B cell (primary cell): ENCODE measurements at regions of chr15 and their contacts with region 1.

Region 1: GRCh38 chr15:34209421-34210282 is at the start of gene KATNBL1:
- DNase-seq: peak; percentile 97
- ATAC-seq: peak; percentile 92
- H3K4me3 ChIP-seq: peak within 1 kb of the TSS; percentile 53 to 74 (median 65)
- H3K4me3 Mint-ChIP-seq: peak within 1 kb of the TSS; percentile 93
- H3K27ac ChIP-seq: peak within 1 kb of the TSS; percentile 51 to 80
- H3K27ac Mint-ChIP-seq: peak within 1 kb of the TSS; percentile 89
- H3K4me1 ChIP-seq: peaks cover 9 to 10% of the 10 kb centered on the region in 2 donors
- H3K4me1 Mint-ChIP-seq: peaks cover 15% of the 10 kb centered on the region
- H3K27me3 ChIP-seq: no peaks in the 10 kb centered on the region
- H3K27me3 Mint-ChIP-seq: no peaks in the 10 kb centered on the region
- CTCF ChIP-seq: peak; percentile 85
- total RNA-seq, gene KATNBL1: 54.8 and 57.8 TPM in 2 replicates

Region 2: GRCh38 chr15:33547876-33548275 is 661.8 kb before region 1 on chr15:
- CTCF ChIA-PET with region 1: no interaction called
- POLR2A ChIA-PET with region 1: no interaction called
- intact Hi-C with region 1: no loop called
- DNase-seq: no peak
- ATAC-seq: no peak
- H3K4me3 ChIP-seq: no peak overlapping the region
- H3K4me3 Mint-ChIP-seq: no peak overlapping the region
- H3K27ac ChIP-seq: no peak overlapping the region
- H3K27ac Mint-ChIP-seq: no peak overlapping the region
- H3K4me1 ChIP-seq: no peaks in the 10 kb centered on the region
- H3K4me1 Mint-ChIP-seq: no peaks in the 10 kb centered on the region
- H3K27me3 ChIP-seq: no peaks in the 10 kb centered on the region
- H3K27me3 Mint-ChIP-seq: peaks cover 6% of the 10 kb centered on the region
- CTCF ChIP-seq: no peak

Region 3: GRCh38 chr15:33737687-33738601 is 471.7 kb before region 1 on chr15:
- CTCF ChIA-PET with region 1: no interaction called
- POLR2A ChIA-PET with region 1: no interaction called
- intact Hi-C with region 1: loop called (anchors 5 kb)
- DNase-seq: peak; percentile 45
- ATAC-seq: peak; percentile 61
- H3K4me3 ChIP-seq: no peak overlapping the region
- H3K4me3 Mint-ChIP-seq: no peak overlapping the region
- H3K27ac ChIP-seq: no peak overlapping the region
- H3K27ac Mint-ChIP-seq: no peak overlapping the region
- H3K4me1 ChIP-seq: no peaks in the 10 kb centered on the region
- H3K4me1 Mint-ChIP-seq: no peaks in the 10 kb centered on the region
- H3K27me3 ChIP-seq: no peaks in the 10 kb centered on the region
- H3K27me3 Mint-ChIP-seq: no peaks in the 10 kb centered on the region
- CTCF ChIP-seq: peak; percentile 81

Region 4: GRCh38 chr15:34055853-34056595 is 153.6 kb before region 1 on chr15:
- CTCF ChIA-PET with region 1: interaction called, 57 read pairs
- POLR2A ChIA-PET with region 1: no interaction called
- intact Hi-C with region 1: no loop called
- DNase-seq: no peak
- ATAC-seq: no peak
- H3K4me3 ChIP-seq: no peak overlapping the region
- H3K4me3 Mint-ChIP-seq: no peak overlapping the region
- H3K27ac ChIP-seq: no peak overlapping the region
- H3K27ac Mint-ChIP-seq: no peak overlapping the region
- H3K4me1 ChIP-seq: no peaks in the 10 kb centered on the region
- H3K4me1 Mint-ChIP-seq: no peaks in the 10 kb centered on the region
- H3K27me3 ChIP-seq: no peaks in the 10 kb centered on the region
- H3K27me3 Mint-ChIP-seq: no peaks in the 10 kb centered on the region
- CTCF ChIP-seq: no peak

Region 5: DNA sequence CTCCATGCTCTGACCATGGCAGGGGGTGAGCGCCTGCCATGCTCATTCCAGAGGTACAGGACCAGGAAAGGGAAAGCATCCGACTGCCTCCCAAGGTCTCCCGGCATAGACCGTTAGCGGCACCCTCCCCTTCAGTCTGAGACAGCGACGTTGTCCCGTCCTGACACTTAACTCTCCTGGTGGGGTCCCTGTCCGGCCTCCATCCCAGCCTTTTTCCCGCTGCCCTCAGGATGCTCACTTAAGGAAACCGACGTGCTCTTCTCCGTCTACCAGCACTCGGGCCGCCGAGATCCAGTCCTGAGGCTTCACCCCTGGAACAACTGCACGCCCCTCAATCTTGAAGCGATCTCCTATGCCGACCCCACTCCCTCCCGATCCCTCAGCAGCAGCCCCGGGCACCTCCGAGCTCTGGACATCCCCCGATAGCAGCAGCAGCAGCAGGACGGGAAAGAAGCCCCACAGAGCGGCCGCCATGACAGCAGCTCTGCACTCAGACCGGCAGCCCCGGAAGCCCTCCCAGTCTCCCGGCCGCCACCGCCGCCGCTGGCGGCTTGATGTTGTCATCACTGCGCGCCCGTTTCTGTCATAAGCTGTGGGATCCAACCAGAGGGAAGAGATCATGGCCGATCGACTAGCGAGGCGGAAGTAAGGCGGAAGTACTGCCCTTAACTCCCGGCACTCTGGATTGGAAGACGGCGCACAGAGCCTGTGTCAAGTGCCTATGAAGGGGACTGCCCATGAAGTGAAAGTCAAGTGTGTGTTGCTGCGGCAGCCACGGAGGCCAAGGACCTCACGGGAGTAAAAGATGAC is 108.1 kb before region 1 on chr15 and contains the starts of genes EMC7 and PGBD4:
- CTCF ChIA-PET with region 1: interaction called, 17 read pairs
- POLR2A ChIA-PET with region 1: no interaction called
- intact Hi-C with region 1: loop called (anchors 1 kb)
- DNase-seq: peak; percentile 99
- ATAC-seq: peak; percentile 99
- H3K4me3 ChIP-seq: peak within 1 kb of the TSS; percentile 80 to 99 (median 82)
- H3K4me3 Mint-ChIP-seq: peak within 1 kb of the TSS; percentile 98
- H3K27ac ChIP-seq: peak within 1 kb of the TSS; percentile 92 to 98
- H3K27ac Mint-ChIP-seq: peak within 1 kb of the TSS; percentile 99
- H3K4me1 ChIP-seq: peaks cover 18 to 19% of the 10 kb centered on the region in 2 donors
- H3K4me1 Mint-ChIP-seq: peaks cover 41% of the 10 kb centered on the region
- H3K27me3 ChIP-seq: no peaks in the 10 kb centered on the region
- H3K27me3 Mint-ChIP-seq: no peaks in the 10 kb centered on the region
- CTCF ChIP-seq: no peak
- total RNA-seq, gene EMC7: 28.8 and 29.9 TPM in 2 replicates
- total RNA-seq, gene PGBD4: 5.2 and 5.6 TPM in 2 replicates

Region 6: GRCh38 chr15:34132881-34133280 is 76.8 kb before region 1 on chr15:
- CTCF ChIA-PET with region 1: no interaction called
- POLR2A ChIA-PET with region 1: no interaction called
- intact Hi-C with region 1: no loop called
- DNase-seq: no peak
- ATAC-seq: no peak
- H3K4me3 ChIP-seq: no peak overlapping the region
- H3K4me3 Mint-ChIP-seq: no peak overlapping the region
- H3K27ac ChIP-seq: no peak overlapping the region
- H3K27ac Mint-ChIP-seq: no peak overlapping the region
- H3K4me1 ChIP-seq: no peaks in the 10 kb centered on the region
- H3K4me1 Mint-ChIP-seq: no peaks in the 10 kb centered on the region
- H3K27me3 ChIP-seq: no peaks in the 10 kb centered on the region
- H3K27me3 Mint-ChIP-seq: no peaks in the 10 kb centered on the region
- CTCF ChIP-seq: no peak

Region 7: GRCh38 chr15:34223904-34224596 is 14.4 kb after region 1 on chr15:
- CTCF ChIA-PET with region 1: interaction called, 15 read pairs
- POLR2A ChIA-PET with region 1: interaction called, 10 read pairs
- intact Hi-C with region 1: loop called (anchors 1 kb)
- DNase-seq: no peak
- ATAC-seq: no peak
- H3K4me3 ChIP-seq: peak overlapping the region; percentile 77 to 98 (median 82)
- H3K4me3 Mint-ChIP-seq: peak overlapping the region; percentile 94
- H3K27ac ChIP-seq: peak overlapping the region; percentile 77 to 90
- H3K27ac Mint-ChIP-seq: peak overlapping the region; percentile 98
- H3K4me1 ChIP-seq: peaks cover 8 to 16% of the 10 kb centered on the region in 2 donors
- H3K4me1 Mint-ChIP-seq: peaks cover 26% of the 10 kb centered on the region
- H3K27me3 ChIP-seq: no peaks in the 10 kb centered on the region
- H3K27me3 Mint-ChIP-seq: no peaks in the 10 kb centered on the region
- CTCF ChIP-seq: no peak

Region 8: GRCh38 chr15:34342737-34343575 is 133.3 kb after region 1 on chr15 and contains the starts of genes NOP10 and NUTM1:
- CTCF ChIA-PET with region 1: interaction called, 8 read pairs
- POLR2A ChIA-PET with region 1: no interaction called
- intact Hi-C with region 1: loop called (anchors 1 kb)
- DNase-seq: peak; percentile 93
- ATAC-seq: peak; percentile 85
- H3K4me3 ChIP-seq: peak within 1 kb of the TSS; percentile 94 to 99 (median 98)
- H3K4me3 Mint-ChIP-seq: peak within 1 kb of the TSS; percentile 85
- H3K27ac ChIP-seq: peak within 1 kb of the TSS; percentile 79 to 81
- H3K27ac Mint-ChIP-seq: peak within 1 kb of the TSS; percentile 63
- H3K4me1 ChIP-seq: peaks cover 16 to 18% of the 10 kb centered on the region in 2 donors
- H3K4me1 Mint-ChIP-seq: peaks cover 20% of the 10 kb centered on the region
- H3K27me3 ChIP-seq: no peaks in the 10 kb centered on the region
- H3K27me3 Mint-ChIP-seq: no peaks in the 10 kb centered on the region
- CTCF ChIP-seq: peak; percentile 97
- total RNA-seq, gene NOP10: 65.6 and 68.2 TPM in 2 replicates
- total RNA-seq, gene NUTM1: not detected in 2 replicates